Dendritic cell treated with granulocyte-macrophage colony-stimulating factor and Interleukin-4, amounts not matched to agents 40 ng/mL and 50 ng/mL, for 4 days (primary cell): ENCODE measurements at regions of chr1 and their contacts with region 1.

Region 1: GRCh38 chr1:234963180-234963903 is 165.3 kb downstream of the TOMM20 start:
- H3K4me3 Mint-ChIP-seq: peak overlapping the region; percentile 59
- H3K27ac Mint-ChIP-seq: peak overlapping the region; percentile 98
- H3K4me1 Mint-ChIP-seq: peaks cover 83% of the 10 kb centered on the region
- H3K27me3 Mint-ChIP-seq: no peaks in the 10 kb centered on the region

Region 2: GRCh38 chr1:234722904-234723720 is 240.2 kb before region 1 on chr1:
- intact Hi-C with region 1: loop called (anchors 5 kb)
- H3K4me3 Mint-ChIP-seq: peak overlapping the region; percentile 57
- H3K27ac Mint-ChIP-seq: peak overlapping the region; percentile 99
- H3K4me1 Mint-ChIP-seq: peaks cover 97% of the 10 kb centered on the region
- H3K27me3 Mint-ChIP-seq: no peaks in the 10 kb centered on the region